Ovary (tissue), 10 donors: ENCODE measurements at regions of chr16 and their contacts with region 1.

Region 1: DNA sequence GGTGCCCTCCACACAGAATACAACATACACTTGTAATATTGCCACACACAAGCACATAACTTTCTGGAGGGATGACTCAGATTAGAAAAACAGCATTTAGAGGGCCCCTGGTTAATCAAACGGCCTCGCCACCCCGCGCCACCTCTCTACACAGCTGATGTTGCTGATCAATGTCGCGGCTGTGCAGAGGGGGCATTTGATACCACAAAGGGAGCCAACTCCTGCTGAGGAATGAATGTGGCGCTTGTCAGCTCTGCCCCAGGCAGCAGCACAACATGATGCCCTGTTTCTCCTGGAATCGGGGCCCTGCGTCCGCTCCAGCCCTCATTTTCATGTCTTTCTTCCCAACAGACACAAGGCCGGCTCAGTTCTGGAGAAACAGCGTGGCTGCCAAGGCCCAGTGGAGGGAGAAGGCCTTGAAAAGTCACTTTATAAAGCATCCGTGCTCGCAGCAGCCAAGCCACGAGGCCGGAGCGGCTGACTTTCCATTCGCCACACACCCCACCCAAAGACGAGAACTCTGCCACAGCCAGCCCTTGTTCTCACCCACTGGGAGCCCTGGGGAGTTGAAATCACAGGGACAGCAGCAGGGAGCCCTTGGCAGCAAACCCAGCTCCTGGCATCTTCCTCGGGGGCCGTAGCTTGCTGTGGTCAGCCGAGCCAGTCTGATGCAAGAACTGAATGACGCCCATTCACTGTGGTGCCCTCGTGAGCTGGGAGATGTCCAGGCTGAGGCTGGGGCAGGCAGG is 65.6 kb downstream of the XYLT1 start:
- DNase-seq: peak; percentile 74 to 82 (median 76)
- H3K4me3 ChIP-seq: no peak overlapping the region
- H3K27ac ChIP-seq: peak overlapping the region; percentile 6 to 83
- H3K4me1 ChIP-seq: peaks cover 7% of the 10 kb centered on the region
- H3K27me3 ChIP-seq: no peaks in the 10 kb centered on the region
- CTCF ChIP-seq: no peak
- EP300 ChIP-seq: no peak
- POLR2A ChIP-seq: no peak

Region 2: GRCh38 chr16:17143546-17144419 is 261.3 kb before region 1 on chr16:
- intact Hi-C with region 1: no loop called
- DNase-seq: no peak
- H3K4me3 ChIP-seq: no peak overlapping the region
- H3K27ac ChIP-seq: no peak overlapping the region
- H3K4me1 ChIP-seq: no peaks in the 10 kb centered on the region
- H3K27me3 ChIP-seq: no peaks in the 10 kb centered on the region
- CTCF ChIP-seq: no peak
- EP300 ChIP-seq: no peak
- POLR2A ChIP-seq: no peak

Region 3: DNA sequence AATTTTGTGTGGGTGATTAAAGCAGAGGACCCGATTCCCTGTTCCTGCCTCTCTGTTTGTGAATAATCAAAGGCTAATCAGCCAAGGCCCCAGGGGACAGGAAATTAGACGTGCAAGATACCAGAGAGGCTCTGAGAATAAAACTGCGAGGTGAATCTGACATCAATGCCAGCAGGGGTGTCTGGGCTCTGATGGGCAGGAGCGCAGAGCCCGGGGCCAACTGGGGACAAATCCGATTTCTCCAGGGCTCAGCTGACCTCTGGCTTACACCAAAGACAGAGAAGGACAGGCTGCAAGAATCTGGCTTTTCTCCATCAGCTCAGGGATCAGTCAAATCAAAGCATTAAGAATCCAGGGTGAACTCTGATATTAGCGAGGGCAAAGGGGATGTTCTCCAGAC is 108.7 kb before region 1 on chr16:
- intact Hi-C with region 1: no loop called
- DNase-seq: no peak
- H3K4me3 ChIP-seq: no peak overlapping the region
- H3K27ac ChIP-seq: no peak overlapping the region
- H3K4me1 ChIP-seq: peaks cover 6% of the 10 kb centered on the region
- H3K27me3 ChIP-seq: no peaks in the 10 kb centered on the region
- CTCF ChIP-seq: no peak
- EP300 ChIP-seq: no peak
- POLR2A ChIP-seq: no peak

Region 4: GRCh38 chr16:17313085-17313611 is 92.0 kb before region 1 on chr16:
- intact Hi-C with region 1: loop called in 1 of 4 experiments (anchors 10 kb)
- DNase-seq: peak; percentile 50 to 86 (median 69)
- H3K4me3 ChIP-seq: no peak overlapping the region
- H3K27ac ChIP-seq: peak overlapping the region in 1 of 2 donors; percentile 54
- H3K4me1 ChIP-seq: peaks cover 12% of the 10 kb centered on the region
- H3K27me3 ChIP-seq: no peaks in the 10 kb centered on the region
- CTCF ChIP-seq: no peak
- EP300 ChIP-seq: no peak
- POLR2A ChIP-seq: no peak